CD4-positive, alpha-beta T cell (primary cell): ENCODE measurements at regions of chr1 and their contacts with region 1.

Region 1: DNA sequence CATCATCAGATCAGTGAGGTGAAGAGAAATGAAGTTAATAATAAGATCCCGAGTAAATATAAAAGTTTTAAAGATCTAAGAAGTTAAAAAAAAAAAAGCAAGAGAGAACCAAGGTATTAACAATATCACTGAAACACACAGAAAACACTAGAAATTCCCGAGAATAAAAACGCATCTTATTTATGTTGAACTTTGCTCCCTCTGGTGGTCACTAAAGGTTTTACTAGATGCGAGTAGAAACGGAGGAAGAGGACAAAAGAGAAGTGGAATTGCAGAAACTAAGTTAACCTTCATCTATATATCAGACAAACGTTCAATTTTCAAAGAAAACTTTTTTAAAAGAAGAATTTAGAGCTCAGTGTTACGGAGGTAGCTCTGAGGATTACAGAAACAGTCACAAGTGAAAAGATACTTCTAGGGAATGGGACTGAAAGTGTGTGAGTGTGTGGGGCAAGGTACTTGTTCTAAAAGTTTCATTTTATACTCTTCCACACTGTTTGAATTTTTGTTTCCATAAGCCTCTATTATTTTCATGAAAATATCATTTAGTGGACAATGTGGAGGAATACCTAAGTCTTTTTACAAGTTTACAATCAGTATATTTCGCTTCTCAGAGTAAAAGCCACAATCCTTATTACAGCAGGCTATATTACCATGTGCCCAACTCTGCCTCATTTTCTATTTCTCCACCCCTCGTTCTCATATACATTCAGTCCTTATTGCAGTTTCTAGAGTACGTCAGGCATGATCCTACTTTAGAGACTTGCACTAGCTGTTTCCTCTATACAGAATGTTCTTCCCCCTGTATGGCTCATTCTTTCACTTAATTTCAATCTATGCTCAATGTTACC is 19.7 kb downstream of the ACBD6 start:
- DNase-seq: peak in 4 of 14 experiments; percentile 10 to 68 (median 58)
- ATAC-seq: peak; percentile 52
- H3K4me3 ChIP-seq: no peak overlapping the region
- H3K4me3 Mint-ChIP-seq: no peak overlapping the region
- H3K27ac ChIP-seq: no peak overlapping the region
- H3K27ac Mint-ChIP-seq: no peak overlapping the region
- H3K4me1 ChIP-seq: no peaks in the 10 kb centered on the region
- H3K4me1 Mint-ChIP-seq: peaks cover 21% of the 10 kb centered on the region
- H3K27me3 ChIP-seq: no peaks in the 10 kb centered on the region
- H3K27me3 Mint-ChIP-seq: no peaks in the 10 kb centered on the region
- CTCF ChIP-seq: peak; percentile 88

Region 2: GRCh38 chr1:179706339-179706941 is 776.2 kb before region 1 on chr1:
- CTCF ChIA-PET with region 1: no interaction called
- POLR2A ChIA-PET with region 1: no interaction called
- intact Hi-C with region 1: loop called in 1 of 2 experiments (anchors 5 kb)
- DNase-seq: peak; percentile 29 to 85 (median 54)
- ATAC-seq: no peak
- H3K4me3 ChIP-seq: no peak overlapping the region
- H3K4me3 Mint-ChIP-seq: no peak overlapping the region
- H3K27ac ChIP-seq: no peak overlapping the region
- H3K27ac Mint-ChIP-seq: peak overlapping the region; percentile 70
- H3K4me1 ChIP-seq: peaks cover 15% of the 10 kb centered on the region
- H3K4me1 Mint-ChIP-seq: peaks cover 25% of the 10 kb centered on the region
- H3K27me3 ChIP-seq: no peaks in the 10 kb centered on the region
- H3K27me3 Mint-ChIP-seq: no peaks in the 10 kb centered on the region
- CTCF ChIP-seq: peak; percentile 80

Region 3: GRCh38 chr1:180188091-180188506 is 294.6 kb before region 1 on chr1:
- CTCF ChIA-PET with region 1: no interaction called
- POLR2A ChIA-PET with region 1: no interaction called
- intact Hi-C with region 1: loop called in 1 of 2 experiments (anchors 5 kb)
- DNase-seq: peak in 2 of 14 experiments; percentile 8 to 9
- ATAC-seq: no peak
- H3K4me3 ChIP-seq: no peak overlapping the region
- H3K4me3 Mint-ChIP-seq: no peak overlapping the region
- H3K27ac ChIP-seq: no peak overlapping the region
- H3K27ac Mint-ChIP-seq: no peak overlapping the region
- H3K4me1 ChIP-seq: peaks cover 4% of the 10 kb centered on the region
- H3K4me1 Mint-ChIP-seq: no peaks in the 10 kb centered on the region
- H3K27me3 ChIP-seq: no peaks in the 10 kb centered on the region
- H3K27me3 Mint-ChIP-seq: no peaks in the 10 kb centered on the region
- CTCF ChIP-seq: no peak

Region 4: DNA sequence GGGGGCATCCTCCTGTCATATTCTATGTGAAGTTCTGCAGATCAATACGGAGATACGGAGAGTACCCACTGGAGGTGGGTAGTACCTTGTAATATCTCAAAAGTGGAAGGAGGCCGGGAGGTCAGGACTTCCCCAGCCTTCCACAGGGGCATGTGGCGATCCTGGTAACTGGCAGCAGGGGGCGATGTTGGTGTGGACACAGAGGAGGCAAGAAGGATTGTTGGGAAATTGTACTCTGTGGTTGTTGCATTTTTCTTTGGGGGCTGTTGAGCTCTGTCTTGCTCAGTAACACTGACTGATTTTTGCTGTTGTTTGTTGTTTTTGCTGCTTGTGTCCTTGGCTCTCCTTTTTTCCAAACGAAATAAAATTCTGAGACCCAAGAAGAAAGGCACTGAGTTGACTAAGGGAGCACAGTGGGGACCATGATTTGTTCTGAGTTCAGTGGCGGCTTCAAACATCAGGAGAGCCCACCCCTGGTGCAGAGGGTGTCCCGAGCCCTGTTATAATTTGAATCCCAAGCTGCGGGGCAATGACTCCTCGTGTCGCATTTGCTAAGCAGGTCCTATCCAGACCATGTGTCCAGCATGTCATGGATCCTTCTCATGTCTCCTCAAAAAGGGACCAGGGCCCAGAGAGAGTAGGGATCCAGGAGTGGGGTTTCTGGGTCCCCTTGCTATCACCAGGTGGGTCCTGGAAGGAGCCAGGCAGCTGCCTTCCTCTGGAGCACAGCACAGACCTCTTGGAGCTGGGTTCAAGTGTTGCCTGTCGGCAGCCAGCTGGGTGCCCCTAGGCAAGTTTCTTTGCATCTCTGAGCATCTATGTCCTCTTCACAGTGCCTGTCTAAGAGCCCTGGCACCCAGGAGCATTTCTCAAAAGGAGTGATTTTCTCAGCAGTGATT is 229.8 kb before region 1 on chr1:
- CTCF ChIA-PET with region 1: interaction called, 4 read pairs
- POLR2A ChIA-PET with region 1: no interaction called
- intact Hi-C with region 1: loop called (anchors 1 kb)
- DNase-seq: peak; percentile 40 to 78 (median 54)
- ATAC-seq: peak; percentile 66
- H3K4me3 ChIP-seq: no peak overlapping the region
- H3K4me3 Mint-ChIP-seq: no peak overlapping the region
- H3K27ac ChIP-seq: no peak overlapping the region
- H3K27ac Mint-ChIP-seq: no peak overlapping the region
- H3K4me1 ChIP-seq: no peaks in the 10 kb centered on the region
- H3K4me1 Mint-ChIP-seq: no peaks in the 10 kb centered on the region
- H3K27me3 ChIP-seq: peaks cover 27 to 43% of the 10 kb centered on the region in 2 experiments
- H3K27me3 Mint-ChIP-seq: peaks cover 78% of the 10 kb centered on the region
- CTCF ChIP-seq: peak; percentile 76

Region 5: DNA sequence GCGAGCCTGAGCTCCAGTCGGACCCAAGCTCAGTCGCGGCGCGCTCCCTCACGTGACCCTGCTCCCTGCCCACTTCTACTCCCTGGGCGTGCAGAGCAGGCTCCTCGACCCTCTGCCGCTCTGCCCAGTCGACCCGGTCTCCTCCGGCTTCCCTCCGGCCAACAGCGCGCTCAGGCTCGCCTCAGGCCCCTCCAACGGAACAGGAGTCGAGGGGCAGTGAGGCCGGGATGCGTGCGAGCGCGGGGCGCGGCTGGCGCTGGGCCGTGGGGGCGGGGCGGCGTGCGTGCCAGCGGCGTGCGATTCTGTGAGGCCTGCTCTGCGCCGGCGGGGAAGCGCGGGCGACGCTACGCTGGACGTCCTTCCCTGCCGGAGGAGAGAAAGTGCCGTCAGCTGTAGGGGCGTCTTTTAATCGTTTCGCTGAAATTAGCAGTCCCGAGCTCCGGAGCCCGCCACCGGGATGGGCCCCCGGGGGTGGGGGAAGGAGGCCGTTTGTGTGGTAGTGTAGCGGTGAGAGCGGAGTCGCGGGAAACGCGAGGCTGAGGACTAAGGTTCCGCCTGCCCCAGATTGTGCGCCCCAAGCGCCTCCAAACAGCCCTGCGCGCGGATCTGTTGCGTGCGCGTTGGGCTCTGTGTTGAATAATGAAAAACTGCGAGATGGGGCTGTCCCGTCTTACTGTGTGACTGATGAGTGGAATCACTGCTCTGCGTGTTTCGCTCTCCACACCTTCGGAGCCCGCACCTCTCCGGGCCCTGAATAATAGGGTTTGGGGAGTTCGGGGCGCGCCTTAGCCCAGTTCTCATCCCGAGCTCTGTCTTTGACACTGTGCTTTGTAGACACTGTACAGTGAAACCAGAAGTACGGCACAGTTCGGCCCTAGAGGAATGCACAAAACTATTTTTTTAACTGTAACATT is 20.0 kb after region 1 on chr1 and contains the start of gene ACBD6:
- CTCF ChIA-PET with region 1: interaction called, 4 read pairs
- POLR2A ChIA-PET with region 1: no interaction called
- intact Hi-C with region 1: loop called in 1 of 2 experiments (anchors 2 kb)
- DNase-seq: peak; percentile 76 to 94 (median 83)
- ATAC-seq: peak; percentile 90
- H3K4me3 ChIP-seq: peak within 1 kb of the TSS; percentile 98
- H3K4me3 Mint-ChIP-seq: peak within 1 kb of the TSS; percentile 92
- H3K27ac ChIP-seq: peak within 1 kb of the TSS; percentile 74 to 85
- H3K27ac Mint-ChIP-seq: peak within 1 kb of the TSS; percentile 94
- H3K4me1 ChIP-seq: peaks cover 23% of the 10 kb centered on the region
- H3K4me1 Mint-ChIP-seq: peaks cover 43% of the 10 kb centered on the region
- H3K27me3 ChIP-seq: no peaks in the 10 kb centered on the region
- H3K27me3 Mint-ChIP-seq: no peaks in the 10 kb centered on the region
- CTCF ChIP-seq: no peak
- total RNA-seq, gene ACBD6: 28.2 to 28.8 TPM

Region 6: GRCh38 chr1:180540697-180541594 is 58.3 kb after region 1 on chr1:
- CTCF ChIA-PET with region 1: no interaction called
- POLR2A ChIA-PET with region 1: no interaction called
- intact Hi-C with region 1: no loop called
- DNase-seq: no peak
- ATAC-seq: no peak
- H3K4me3 ChIP-seq: no peak overlapping the region
- H3K4me3 Mint-ChIP-seq: no peak overlapping the region
- H3K27ac ChIP-seq: no peak overlapping the region
- H3K27ac Mint-ChIP-seq: no peak overlapping the region
- H3K4me1 ChIP-seq: no peaks in the 10 kb centered on the region
- H3K4me1 Mint-ChIP-seq: no peaks in the 10 kb centered on the region
- H3K27me3 ChIP-seq: peaks cover 0 to 2% of the 10 kb centered on the region in 2 experiments
- H3K27me3 Mint-ChIP-seq: no peaks in the 10 kb centered on the region
- CTCF ChIP-seq: no peak

Region 7: GRCh38 chr1:180652792-180653191 is 170.1 kb after region 1 on chr1:
- CTCF ChIA-PET with region 1: no interaction called
- POLR2A ChIA-PET with region 1: no interaction called
- intact Hi-C with region 1: no loop called
- DNase-seq: no peak
- ATAC-seq: no peak
- H3K4me3 ChIP-seq: no peak overlapping the region
- H3K4me3 Mint-ChIP-seq: no peak overlapping the region
- H3K27ac ChIP-seq: no peak overlapping the region
- H3K27ac Mint-ChIP-seq: no peak overlapping the region
- H3K4me1 ChIP-seq: no peaks in the 10 kb centered on the region
- H3K4me1 Mint-ChIP-seq: peaks cover 13% of the 10 kb centered on the region
- H3K27me3 ChIP-seq: no peaks in the 10 kb centered on the region
- H3K27me3 Mint-ChIP-seq: no peaks in the 10 kb centered on the region
- CTCF ChIP-seq: no peak